ENCODE measurements at regions of chr12 and their contacts with region 1.

Region 1: GRCh38 chr12:12736759-12737676 is 19.9 kb downstream of the CDKN1B start:
- DNase-seq: peak; percentile 69 to 85 (median 79)
- H3K4me3 ChIP-seq: peak overlapping the region in 6 of 7 experiments; percentile 15 to 56 (median 27)
- H3K27ac ChIP-seq: peak overlapping the region in 1 of 2 experiments; percentile 27
- H3K4me1 ChIP-seq: peaks cover 11 to 33% (median 27%) of the 10 kb centered on the region in 4 experiments
- H3K27me3 ChIP-seq: no peaks in the 10 kb centered on the region

Region 2: DNA sequence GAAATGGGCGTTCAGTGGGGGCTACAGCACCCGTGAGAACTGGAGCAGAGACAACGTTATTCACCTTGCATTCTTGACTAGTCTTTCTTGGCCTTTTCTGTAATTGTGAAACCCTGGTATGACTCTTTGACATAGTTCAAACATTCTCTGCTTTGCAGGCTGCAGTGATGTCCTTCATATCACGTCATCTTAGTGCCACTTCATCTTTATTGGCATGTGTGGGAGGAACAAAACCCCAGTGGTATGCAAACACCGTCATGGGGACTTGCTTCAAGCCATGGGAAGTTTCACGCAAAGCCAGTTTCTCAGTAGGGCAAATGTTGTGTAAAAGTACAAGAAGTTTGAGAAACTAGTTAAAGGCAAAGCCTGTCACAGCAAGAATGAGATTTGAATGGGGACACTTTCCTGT is 154.1 kb before region 1 on chr12:
- CTCF ChIA-PET with region 1: no interaction called
- POLR2A ChIA-PET with region 1: no interaction called
- DNase-seq: no peak
- H3K4me3 ChIP-seq: no peak overlapping the region
- H3K27ac ChIP-seq: no peak overlapping the region
- H3K4me1 ChIP-seq: no peaks in the 10 kb centered on the region
- H3K27me3 ChIP-seq: no peaks in the 10 kb centered on the region

Region 3: DNA sequence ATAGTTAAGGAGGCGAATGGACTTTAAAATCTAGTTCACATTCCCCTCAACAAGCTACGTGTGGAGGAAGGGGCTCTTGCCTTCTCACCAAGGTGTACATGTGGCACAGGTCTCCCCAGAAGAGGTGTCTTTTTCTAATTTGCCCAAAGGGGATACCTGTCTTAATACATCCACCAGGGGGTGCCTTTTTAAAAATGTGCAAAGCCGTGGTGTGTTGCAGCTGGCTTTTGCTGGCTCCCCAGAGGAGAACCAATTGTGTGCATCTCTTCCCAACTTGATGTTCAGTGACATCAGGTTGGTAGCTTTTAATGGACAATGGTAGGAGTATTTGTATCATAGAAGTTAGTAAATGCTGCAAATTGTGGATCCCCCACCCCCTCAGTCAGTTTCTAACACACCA is 91.5 kb before region 1 on chr12:
- CTCF ChIA-PET with region 1: interaction called, 14 read pairs
- POLR2A ChIA-PET with region 1: no interaction called
- DNase-seq: peak; percentile 57 to 75 (median 74)
- H3K4me3 ChIP-seq: no peak overlapping the region
- H3K27ac ChIP-seq: no peak overlapping the region
- H3K4me1 ChIP-seq: no peaks in the 10 kb centered on the region
- H3K27me3 ChIP-seq: no peaks in the 10 kb centered on the region

Region 4: DNA sequence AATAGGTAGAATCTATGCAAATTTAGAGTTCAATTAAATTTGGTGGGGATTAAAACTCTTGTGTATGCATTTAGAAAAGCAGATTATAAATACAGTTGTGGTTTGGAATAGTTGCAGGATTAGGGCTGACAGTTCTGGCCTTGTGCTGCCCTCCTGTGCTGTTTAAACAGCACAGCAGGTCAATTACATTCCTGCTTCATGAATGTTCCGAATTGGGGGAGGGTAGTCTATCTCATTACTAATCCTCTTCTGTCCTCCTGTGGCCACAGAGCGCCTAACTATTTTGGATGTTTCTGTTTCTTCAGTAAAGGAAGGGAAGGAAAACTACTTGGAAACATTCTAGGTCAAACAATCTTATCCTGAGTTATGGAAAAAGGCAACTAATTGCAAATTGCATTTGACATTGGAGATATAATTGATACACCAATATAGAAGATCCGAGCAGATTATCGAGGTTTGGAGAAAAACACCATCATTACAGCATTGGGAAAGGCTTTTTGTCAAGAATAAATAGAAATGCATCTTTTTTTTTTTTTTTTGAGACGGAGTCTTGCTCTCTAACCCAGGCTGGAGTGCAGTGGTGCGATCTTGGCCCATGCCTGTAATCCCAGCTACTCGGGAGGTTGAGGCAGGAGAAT is 32.3 kb before region 1 on chr12:
- CTCF ChIA-PET with region 1: interaction called, 62 read pairs
- POLR2A ChIA-PET with region 1: no interaction called
- DNase-seq: peak; percentile 92 to 95 (median 95)
- H3K4me3 ChIP-seq: no peak overlapping the region
- H3K27ac ChIP-seq: no peak overlapping the region
- H3K4me1 ChIP-seq: peaks cover 25 to 41% (median 34%) of the 10 kb centered on the region in 4 experiments
- H3K27me3 ChIP-seq: no peaks in the 10 kb centered on the region

Region 5: GRCh38 chr12:12716793-12717585 is 20.0 kb before region 1 on chr12 and contains the start of gene CDKN1B:
- CTCF ChIA-PET with region 1: interaction called, 62 read pairs
- POLR2A ChIA-PET with region 1: interaction called, 3 read pairs
- DNase-seq: peak; percentile 90 to 97 (median 94)
- H3K4me3 ChIP-seq: peak within 1 kb of the TSS; percentile 97 to 100 (median 100)
- H3K27ac ChIP-seq: peak within 1 kb of the TSS; percentile 87 to 97
- H3K4me1 ChIP-seq: peaks cover 46 to 73% (median 54%) of the 10 kb centered on the region in 4 experiments
- H3K27me3 ChIP-seq: no peaks in the 10 kb centered on the region

Region 6: GRCh38 chr12:12724661-12725545 is 12.1 kb before region 1 on chr12:
- CTCF ChIA-PET with region 1: interaction called, 17 read pairs
- POLR2A ChIA-PET with region 1: no interaction called
- DNase-seq: peak; percentile 99 to 100 (median 99)
- H3K4me3 ChIP-seq: peak overlapping the region; percentile 60 to 98 (median 87)
- H3K27ac ChIP-seq: peak overlapping the region; percentile 82 to 93
- H3K4me1 ChIP-seq: peaks cover 25 to 73% (median 49%) of the 10 kb centered on the region in 4 experiments
- H3K27me3 ChIP-seq: no peaks in the 10 kb centered on the region

Region 7: DNA sequence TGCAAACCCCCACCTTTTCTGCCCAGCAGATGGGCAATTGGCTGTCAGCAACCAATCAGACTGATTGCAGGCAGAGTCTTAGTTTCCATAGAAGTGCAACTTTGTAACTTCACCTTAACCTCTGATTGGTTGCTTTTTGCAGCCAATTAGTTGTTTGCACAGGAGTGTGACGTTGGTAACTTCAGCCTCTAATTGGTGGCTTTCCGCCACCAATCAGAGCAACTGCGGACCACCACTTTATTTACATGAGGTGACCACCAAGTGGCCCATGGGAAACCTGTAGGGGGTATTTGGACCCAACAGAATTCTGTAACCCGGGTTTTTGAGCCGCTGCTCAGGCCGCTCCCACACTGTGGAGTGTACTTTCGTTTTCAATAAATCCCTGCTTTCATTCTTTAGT is 12.4 kb after region 1 on chr12:
- CTCF ChIA-PET with region 1: interaction called, 30 read pairs
- POLR2A ChIA-PET with region 1: no interaction called
- DNase-seq: no peak
- H3K4me3 ChIP-seq: no peak overlapping the region
- H3K27ac ChIP-seq: no peak overlapping the region
- H3K4me1 ChIP-seq: no peaks in the 10 kb centered on the region
- H3K27me3 ChIP-seq: no peaks in the 10 kb centered on the region